Endothelial cell of umbilical vein (primary cell): ENCODE measurements at regions of chr11 and their contacts with region 1.

Region 1: DNA sequence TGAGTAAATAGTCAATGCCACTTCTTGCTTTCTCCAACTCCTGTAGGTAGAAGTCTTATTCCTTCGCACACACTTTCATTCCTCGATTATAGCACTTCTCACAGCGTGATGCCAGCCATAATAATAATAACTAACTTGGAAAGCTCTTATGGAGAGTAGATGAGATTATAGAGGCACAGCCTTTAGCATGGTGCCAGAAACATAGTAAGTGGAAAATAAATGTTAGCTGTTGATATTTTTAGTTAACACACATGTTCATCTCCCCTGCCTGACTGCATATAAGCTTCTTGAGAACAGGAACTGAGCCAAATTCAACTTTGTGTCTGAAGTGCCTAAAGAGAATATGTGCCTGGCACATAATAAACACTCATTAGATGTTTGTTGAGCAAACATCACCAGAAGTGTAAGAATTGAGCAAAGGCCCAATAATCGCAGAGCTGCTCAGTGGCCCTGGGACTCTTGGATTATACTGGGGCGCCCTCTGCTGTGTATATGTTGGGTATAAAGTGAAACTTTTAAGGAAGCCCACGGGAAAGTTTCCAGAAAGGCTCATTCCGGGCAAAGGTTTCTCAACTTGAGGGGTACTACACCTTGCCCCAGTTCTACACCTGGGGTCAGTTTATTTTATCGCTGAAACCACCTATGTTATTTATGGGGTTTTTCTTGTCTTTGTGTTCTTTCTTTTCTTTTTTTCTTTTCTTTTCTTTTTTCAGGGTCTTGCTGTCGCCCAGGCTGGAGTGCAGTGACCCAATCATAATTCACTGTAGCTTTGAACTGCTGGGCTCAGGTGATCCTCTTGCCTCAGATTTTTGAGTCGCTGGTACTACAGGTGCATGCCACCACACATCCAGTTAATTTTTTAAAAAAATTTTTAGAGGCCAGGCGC is 22.3 kb downstream of the SLN start:
- DNase-seq: peak; percentile 67
- H3K4me3 ChIP-seq: no peak overlapping the region
- H3K27ac ChIP-seq: no peak overlapping the region
- H3K4me1 ChIP-seq: peaks cover 6% of the 10 kb centered on the region
- H3K27me3 ChIP-seq: no peaks in the 10 kb centered on the region
- CTCF ChIP-seq: peak; percentile 52 to 57
- POLR2A ChIP-seq: no peak

Region 2: DNA sequence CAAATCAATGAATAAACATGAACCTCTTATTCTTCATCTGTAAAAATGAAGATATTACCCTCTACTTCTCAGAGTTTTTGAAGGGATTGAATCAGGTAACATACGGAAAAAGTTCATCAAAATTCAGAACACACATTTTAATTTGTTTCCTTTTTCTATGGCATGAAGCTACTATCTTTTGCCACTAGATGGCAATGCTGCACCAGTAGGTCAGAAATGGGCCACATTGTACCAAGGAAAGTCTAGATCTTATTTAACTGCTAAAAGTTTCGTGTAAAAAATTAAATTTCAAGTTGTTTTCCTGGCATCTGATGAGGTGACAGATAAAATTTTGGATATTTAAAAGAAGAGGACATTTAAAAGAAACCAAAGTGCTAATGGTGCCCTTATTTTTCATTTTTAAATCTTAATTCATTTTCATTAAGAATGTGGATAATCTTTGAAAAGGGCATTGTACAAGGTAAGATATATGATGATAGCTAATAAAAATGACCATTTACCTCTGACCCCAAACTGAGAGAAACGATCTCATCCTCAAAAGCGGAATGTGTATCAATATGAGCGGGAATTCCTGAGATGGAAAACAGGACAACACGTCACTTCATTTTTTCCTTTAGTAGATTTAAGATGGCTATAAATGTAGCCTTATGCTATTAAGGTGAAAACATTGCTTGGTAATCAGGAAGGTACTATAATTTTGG is 140.2 kb before region 1 on chr11:
- CTCF ChIA-PET with region 1: interaction called, 114 read pairs
- POLR2A ChIA-PET with region 1: no interaction called
- dilution Hi-C with region 1: no loop called
- intact Hi-C with region 1: loop called (anchors 1 kb)
- DNase-seq: peak; percentile 64
- H3K4me3 ChIP-seq: no peak overlapping the region
- H3K27ac ChIP-seq: no peak overlapping the region
- H3K4me1 ChIP-seq: peaks cover 18% of the 10 kb centered on the region
- H3K27me3 ChIP-seq: no peaks in the 10 kb centered on the region
- CTCF ChIP-seq: peak; percentile 61 to 64
- POLR2A ChIP-seq: no peak

Region 3: GRCh38 chr11:107573438-107573837 is 116.1 kb before region 1 on chr11:
- CTCF ChIA-PET with region 1: interaction called, 251 read pairs
- POLR2A ChIA-PET with region 1: no interaction called
- dilution Hi-C with region 1: no loop called
- intact Hi-C with region 1: loop called (anchors 1 kb)
- DNase-seq: no peak
- H3K4me3 ChIP-seq: no peak overlapping the region
- H3K27ac ChIP-seq: no peak overlapping the region
- H3K4me1 ChIP-seq: no peaks in the 10 kb centered on the region
- H3K27me3 ChIP-seq: no peaks in the 10 kb centered on the region
- CTCF ChIP-seq: no peak
- POLR2A ChIP-seq: no peak

Region 4: GRCh38 chr11:107590460-107591377 is 98.8 kb before region 1 on chr11 and contains the start of gene ELMOD1:
- CTCF ChIA-PET with region 1: interaction called, 177 read pairs
- POLR2A ChIA-PET with region 1: no interaction called
- dilution Hi-C with region 1: no loop called
- intact Hi-C with region 1: no loop called
- DNase-seq: peak; percentile 46
- H3K4me3 ChIP-seq: peak within 1 kb of the TSS; percentile 5 to 86 (median 50)
- H3K27ac ChIP-seq: no peak within 1 kb of the TSS
- H3K4me1 ChIP-seq: peaks cover 12% of the 10 kb centered on the region
- H3K27me3 ChIP-seq: peaks cover 16 to 35% of the 10 kb centered on the region in 2 experiments
- CTCF ChIP-seq: peak in 1 of 2 donors; percentile 39
- POLR2A ChIP-seq: no peak
- total RNA-seq, gene ELMOD1: 0.53 and 2.4 TPM in 2 replicates

Region 5: GRCh38 chr11:107606141-107606540 is 83.4 kb before region 1 on chr11:
- CTCF ChIA-PET with region 1: interaction called, 177 read pairs
- POLR2A ChIA-PET with region 1: no interaction called
- dilution Hi-C with region 1: no loop called
- intact Hi-C with region 1: no loop called
- DNase-seq: no peak
- H3K4me3 ChIP-seq: no peak overlapping the region
- H3K27ac ChIP-seq: no peak overlapping the region
- H3K4me1 ChIP-seq: peaks cover 22% of the 10 kb centered on the region
- H3K27me3 ChIP-seq: no peaks in the 10 kb centered on the region
- CTCF ChIP-seq: no peak
- POLR2A ChIP-seq: no peak

Region 6: GRCh38 chr11:107651672-107652071 is 37.9 kb before region 1 on chr11:
- CTCF ChIA-PET with region 1: interaction called, 11 read pairs
- POLR2A ChIA-PET with region 1: no interaction called
- dilution Hi-C with region 1: no loop called
- intact Hi-C with region 1: no loop called
- DNase-seq: no peak
- H3K4me3 ChIP-seq: no peak overlapping the region
- H3K27ac ChIP-seq: no peak overlapping the region
- H3K4me1 ChIP-seq: peaks cover 6% of the 10 kb centered on the region
- H3K27me3 ChIP-seq: no peaks in the 10 kb centered on the region
- CTCF ChIP-seq: no peak
- POLR2A ChIP-seq: no peak

Region 7: DNA sequence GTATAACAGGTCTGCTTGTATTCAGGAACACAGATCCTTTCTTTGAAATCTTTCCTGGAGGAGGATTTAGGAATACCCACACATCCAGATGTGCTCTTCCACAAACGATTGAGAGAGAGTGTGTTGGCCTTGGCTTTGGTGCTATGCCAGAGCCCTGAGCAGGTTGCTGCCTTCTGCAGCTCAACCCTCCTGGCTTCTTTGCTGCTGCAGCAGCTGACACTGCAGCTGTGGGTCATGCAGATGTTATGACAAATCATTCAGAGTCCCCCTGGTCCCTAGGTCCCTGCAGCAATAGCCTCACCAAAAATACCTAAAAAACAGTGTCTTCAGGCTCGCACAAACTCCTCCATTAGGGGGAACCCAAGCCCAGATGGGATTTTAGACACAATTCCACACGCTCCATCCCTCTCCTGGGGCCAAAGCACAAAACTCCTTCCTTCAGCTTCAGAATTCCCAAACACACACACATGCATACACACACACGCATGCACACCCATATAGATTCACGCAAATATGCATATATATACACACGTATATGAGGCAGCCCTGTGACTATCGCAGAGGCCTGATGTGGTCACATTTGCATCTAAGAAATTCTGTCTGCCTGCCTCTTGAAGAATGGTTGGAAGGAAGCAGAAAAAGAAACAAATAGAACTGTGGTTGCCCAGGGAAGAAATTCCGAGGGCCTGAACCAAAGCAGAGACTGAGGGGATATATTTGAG is 13.1 kb before region 1 on chr11:
- CTCF ChIA-PET with region 1: interaction called, 20 read pairs
- POLR2A ChIA-PET with region 1: no interaction called
- dilution Hi-C with region 1: no loop called
- intact Hi-C with region 1: no loop called
- DNase-seq: no peak
- H3K4me3 ChIP-seq: no peak overlapping the region
- H3K27ac ChIP-seq: no peak overlapping the region
- H3K4me1 ChIP-seq: no peaks in the 10 kb centered on the region
- H3K27me3 ChIP-seq: peaks cover 2% of the 10 kb centered on the region in 2 experiments
- CTCF ChIP-seq: no peak
- POLR2A ChIP-seq: no peak

Region 8: DNA sequence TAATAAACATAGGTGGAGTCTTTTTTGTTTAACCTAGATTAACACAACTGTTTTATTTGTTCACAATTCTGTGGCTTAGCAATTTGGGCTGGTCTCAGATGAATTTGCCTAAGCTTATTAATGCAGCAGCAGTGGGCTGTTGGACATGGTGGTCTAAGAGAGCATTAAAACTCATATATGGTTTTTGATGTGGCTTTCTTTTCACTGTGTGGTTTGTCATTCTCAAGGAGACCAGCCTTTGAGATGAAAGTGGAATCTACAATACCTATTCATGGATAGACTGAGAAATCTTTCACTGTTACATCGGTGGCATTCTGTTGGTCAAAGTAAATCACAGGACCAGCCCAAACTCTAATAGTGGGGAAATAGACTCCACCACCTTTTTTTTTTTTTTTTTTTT is 358.7 kb after region 1 on chr11:
- CTCF ChIA-PET with region 1: no interaction called
- POLR2A ChIA-PET with region 1: no interaction called
- dilution Hi-C with region 1: no loop called
- intact Hi-C with region 1: no loop called
- DNase-seq: no peak
- H3K4me3 ChIP-seq: no peak overlapping the region
- H3K27ac ChIP-seq: no peak overlapping the region
- H3K4me1 ChIP-seq: no peaks in the 10 kb centered on the region
- H3K27me3 ChIP-seq: no peaks in the 10 kb centered on the region
- CTCF ChIP-seq: no peak
- POLR2A ChIP-seq: no peak

Region 9: GRCh38 chr11:108121274-108122155 is 432.0 kb after region 1 on chr11 and contains the start of gene ACAT1:
- CTCF ChIA-PET with region 1: no interaction called
- POLR2A ChIA-PET with region 1: no interaction called
- dilution Hi-C with region 1: no loop called
- intact Hi-C with region 1: no loop called
- DNase-seq: peak; percentile 92
- H3K4me3 ChIP-seq: peak within 1 kb of the TSS; percentile 58 to 85 (median 60)
- H3K27ac ChIP-seq: peak within 1 kb of the TSS; percentile 19
- H3K4me1 ChIP-seq: peaks cover 16% of the 10 kb centered on the region
- H3K27me3 ChIP-seq: no peaks in the 10 kb centered on the region
- CTCF ChIP-seq: peak in 1 of 2 donors; percentile 38
- POLR2A ChIP-seq: peak; percentile 87
- total RNA-seq, gene ACAT1: 51.7 and 59.9 TPM in 2 replicates